PC-3 (cell line): ENCODE measurements at regions of chr11 and their contacts with region 1.

Region 1: DNA sequence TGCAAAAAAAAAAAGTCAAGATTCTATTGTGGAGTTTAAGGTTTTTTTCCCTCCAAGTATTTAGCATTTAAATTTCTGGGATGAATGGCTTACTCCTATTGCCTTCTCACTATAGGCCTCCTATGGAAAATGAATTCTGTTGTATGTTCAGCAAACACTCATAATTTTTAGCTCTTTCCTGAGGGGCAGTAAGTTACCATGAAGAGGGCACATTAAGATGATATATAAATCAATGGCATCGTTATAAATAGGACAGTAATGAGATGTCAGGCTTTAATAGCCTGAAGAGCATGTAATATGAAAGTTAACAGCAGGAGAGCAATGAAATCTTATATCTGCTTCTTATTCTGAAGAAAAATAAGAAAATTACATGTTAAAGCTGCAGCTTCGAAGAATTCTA is 32.9 kb downstream of the C11orf87 start:
- DNase-seq: no peak
- ATAC-seq: no peak
- H3K4me3 ChIP-seq: no peak overlapping the region
- H3K27ac ChIP-seq: no peak overlapping the region
- H3K4me1 ChIP-seq: no peaks in the 10 kb centered on the region
- H3K27me3 ChIP-seq: peaks cover 31% of the 10 kb centered on the region
- CTCF ChIP-seq: no peak

Region 2: DNA sequence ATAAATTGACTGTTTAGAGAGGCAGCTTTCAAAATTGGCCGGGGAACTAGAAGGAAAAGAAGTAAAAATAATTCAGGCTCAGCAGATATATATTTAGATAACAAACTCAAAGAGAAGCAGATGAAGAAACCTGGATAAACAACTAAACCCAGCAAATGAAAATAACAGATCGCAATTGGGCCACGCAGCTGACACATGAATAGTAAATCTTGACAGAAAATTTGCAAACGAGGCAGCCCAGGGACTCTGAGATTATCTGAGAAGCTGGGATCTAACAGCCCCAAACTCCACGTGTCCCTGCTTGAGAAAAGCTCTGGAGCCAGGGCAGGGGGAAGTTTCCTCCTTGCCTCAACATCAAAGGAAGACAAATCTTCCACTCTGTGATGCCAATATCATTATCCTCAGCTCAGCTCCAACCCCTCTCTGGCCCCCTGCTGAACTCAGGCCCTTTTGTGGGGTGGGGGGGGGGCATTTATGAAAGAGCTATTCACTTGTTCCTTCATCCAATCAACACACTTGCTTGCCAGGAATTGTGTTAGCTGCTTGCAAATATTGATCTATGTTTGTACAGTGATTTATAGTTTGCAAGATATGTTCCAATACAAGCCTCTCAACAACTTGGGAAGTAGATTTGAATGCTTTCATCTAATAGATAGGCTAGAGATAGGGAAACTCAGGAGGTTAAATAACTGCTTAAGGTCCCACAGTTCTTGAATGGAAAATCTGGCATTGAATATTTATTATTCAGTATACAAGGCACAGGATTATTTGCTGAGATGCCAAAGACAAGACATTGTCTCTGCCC is 105.4 kb before region 1 on chr11:
- CTCF ChIA-PET with region 1: no interaction called
- POLR2A ChIA-PET with region 1: no interaction called
- intact Hi-C with region 1: no loop called
- DNase-seq: no peak
- ATAC-seq: no peak
- H3K4me3 ChIP-seq: no peak overlapping the region
- H3K27ac ChIP-seq: no peak overlapping the region
- H3K4me1 ChIP-seq: no peaks in the 10 kb centered on the region
- H3K27me3 ChIP-seq: peaks cover 67% of the 10 kb centered on the region
- CTCF ChIP-seq: no peak

Region 3: GRCh38 chr11:110261195-110262140 is 806.6 kb after region 1 on chr11:
- CTCF ChIA-PET with region 1: no interaction called
- POLR2A ChIA-PET with region 1: interaction called, 11 read pairs
- intact Hi-C with region 1: no loop called
- DNase-seq: no peak
- ATAC-seq: no peak
- H3K4me3 ChIP-seq: no peak overlapping the region
- H3K27ac ChIP-seq: no peak overlapping the region
- H3K4me1 ChIP-seq: no peaks in the 10 kb centered on the region
- H3K27me3 ChIP-seq: no peaks in the 10 kb centered on the region
- CTCF ChIP-seq: no peak